BJ (cell line): ENCODE measurements at regions of chr1 and their contacts with region 1.

Region 1: GRCh38 chr1:200415693-200416593 is 6.1 kb upstream of the ZNF281 start:
- DNase-seq: peak; percentile 93
- H3K4me3 ChIP-seq: no peak overlapping the region
- H3K27me3 ChIP-seq: no peaks in the 10 kb centered on the region
- CTCF ChIP-seq: no peak

Region 2: DNA sequence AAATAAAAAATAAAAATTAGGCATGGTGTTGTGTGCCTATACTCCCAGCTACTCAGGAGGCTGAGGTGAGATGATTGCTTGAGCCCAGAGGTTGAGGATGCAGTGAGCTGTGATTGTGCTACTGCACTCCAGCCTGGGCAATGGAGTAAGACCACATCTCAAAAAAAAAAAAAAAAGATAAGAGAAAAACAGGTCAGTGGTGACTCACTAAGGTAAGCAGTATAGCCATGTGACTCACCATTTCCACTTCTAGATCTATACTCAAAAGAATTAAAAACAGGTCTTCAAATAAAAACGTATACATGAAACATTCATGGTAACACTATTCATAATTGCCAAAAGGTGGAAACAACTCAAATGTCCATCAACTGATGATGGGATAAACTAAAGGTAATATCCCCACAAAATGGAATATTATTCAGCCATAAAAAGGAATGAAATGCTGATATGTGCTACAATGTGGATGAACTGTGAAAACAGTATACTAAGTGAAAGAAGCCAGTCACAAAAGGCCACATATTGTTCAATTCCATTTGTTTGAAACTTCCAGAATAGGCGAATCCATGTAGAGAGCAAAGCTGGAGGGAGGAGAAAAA is 81.2 kb before region 1 on chr1:
- CTCF ChIA-PET with region 1: no interaction called
- POLR2A ChIA-PET with region 1: no interaction called
- DNase-seq: no peak
- H3K4me3 ChIP-seq: no peak overlapping the region
- H3K27me3 ChIP-seq: no peaks in the 10 kb centered on the region
- CTCF ChIP-seq: no peak

Region 3: GRCh38 chr1:200428482-200429205 is 12.7 kb after region 1 on chr1:
- CTCF ChIA-PET with region 1: interaction called, 12 read pairs
- POLR2A ChIA-PET with region 1: interaction called, 3 read pairs
- DNase-seq: no peak
- H3K4me3 ChIP-seq: no peak overlapping the region
- H3K27me3 ChIP-seq: no peaks in the 10 kb centered on the region
- CTCF ChIP-seq: no peak